Activated T-helper 1 cell treated with anti-CD3 and anti-CD28 coated beads, Interleukin-12 subunit alpha, Interleukin-12 subunit beta, Interleukin-2, Interleukin-4 antibody, amounts not matched to agents 30 ng/mL and 10 ng/mL and 1 ng/mL, durations not matched to agents 14 hours and 24 hours and 36 hours (primary cell): ENCODE measurements at regions of chr14 and their contacts with region 1.

Region 1: DNA sequence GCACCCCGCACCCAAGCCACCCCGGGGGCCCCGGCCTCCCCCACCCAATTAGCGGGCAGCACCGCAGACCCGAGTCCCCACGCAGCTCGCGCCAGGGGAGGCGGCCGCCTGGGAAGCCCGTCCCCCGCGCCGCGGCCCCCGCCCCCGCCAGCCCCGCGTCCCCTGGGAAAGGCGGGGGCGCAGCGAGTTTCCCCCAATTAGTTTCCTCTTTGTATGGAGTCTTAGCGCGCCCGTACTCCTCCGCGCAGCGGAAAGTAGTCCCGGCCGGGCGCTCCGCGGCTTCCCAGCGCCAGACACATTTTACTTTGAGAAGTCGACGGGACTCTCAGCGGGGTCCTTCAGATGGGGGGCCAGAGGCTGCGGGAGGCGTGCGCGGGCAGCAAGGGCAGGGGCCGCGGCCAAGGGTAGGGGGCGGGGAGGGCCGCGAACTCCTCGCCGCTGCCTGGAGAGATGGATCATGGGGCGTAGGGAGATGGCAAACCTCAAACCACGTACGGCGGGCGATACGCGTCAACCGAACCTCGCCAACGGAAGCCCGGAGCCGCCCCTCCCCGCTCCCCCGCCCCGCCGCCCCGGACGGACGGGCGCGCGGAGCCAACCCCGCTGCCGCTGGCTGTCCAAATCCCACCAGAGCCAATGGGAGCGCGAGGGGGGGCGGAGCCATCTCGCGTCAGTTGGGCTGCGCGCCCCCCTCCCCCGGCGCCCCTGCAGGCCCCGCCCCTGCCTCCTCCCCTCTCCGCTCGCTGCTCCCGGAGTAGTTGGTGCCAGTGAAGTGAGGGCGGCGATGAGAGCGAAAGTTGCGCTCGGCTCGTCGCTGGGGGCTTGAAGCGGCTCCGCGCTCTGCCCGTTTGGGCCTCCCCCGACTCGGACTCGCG is at the start of gene RCOR1:
- DNase-seq: peak; percentile 95
- H3K4me3 Mint-ChIP-seq: peak within 1 kb of the TSS; percentile 94
- H3K27ac Mint-ChIP-seq: peak within 1 kb of the TSS; percentile 96
- H3K4me1 Mint-ChIP-seq: peaks cover 18% of the 10 kb centered on the region
- H3K27me3 Mint-ChIP-seq: no peaks in the 10 kb centered on the region
- total RNA-seq, gene RCOR1: 23.9 and 25.2 TPM in 2 replicates

Region 2: GRCh38 chr14:101823511-101824120 is 768.5 kb before region 1 on chr14:
- intact Hi-C with region 1: loop called (anchors 5 kb)
- DNase-seq: peak; percentile 74
- H3K4me3 Mint-ChIP-seq: peak overlapping the region; percentile 78
- H3K27ac Mint-ChIP-seq: peak overlapping the region; percentile 98
- H3K4me1 Mint-ChIP-seq: peaks cover 84% of the 10 kb centered on the region
- H3K27me3 Mint-ChIP-seq: no peaks in the 10 kb centered on the region

Region 3: DNA sequence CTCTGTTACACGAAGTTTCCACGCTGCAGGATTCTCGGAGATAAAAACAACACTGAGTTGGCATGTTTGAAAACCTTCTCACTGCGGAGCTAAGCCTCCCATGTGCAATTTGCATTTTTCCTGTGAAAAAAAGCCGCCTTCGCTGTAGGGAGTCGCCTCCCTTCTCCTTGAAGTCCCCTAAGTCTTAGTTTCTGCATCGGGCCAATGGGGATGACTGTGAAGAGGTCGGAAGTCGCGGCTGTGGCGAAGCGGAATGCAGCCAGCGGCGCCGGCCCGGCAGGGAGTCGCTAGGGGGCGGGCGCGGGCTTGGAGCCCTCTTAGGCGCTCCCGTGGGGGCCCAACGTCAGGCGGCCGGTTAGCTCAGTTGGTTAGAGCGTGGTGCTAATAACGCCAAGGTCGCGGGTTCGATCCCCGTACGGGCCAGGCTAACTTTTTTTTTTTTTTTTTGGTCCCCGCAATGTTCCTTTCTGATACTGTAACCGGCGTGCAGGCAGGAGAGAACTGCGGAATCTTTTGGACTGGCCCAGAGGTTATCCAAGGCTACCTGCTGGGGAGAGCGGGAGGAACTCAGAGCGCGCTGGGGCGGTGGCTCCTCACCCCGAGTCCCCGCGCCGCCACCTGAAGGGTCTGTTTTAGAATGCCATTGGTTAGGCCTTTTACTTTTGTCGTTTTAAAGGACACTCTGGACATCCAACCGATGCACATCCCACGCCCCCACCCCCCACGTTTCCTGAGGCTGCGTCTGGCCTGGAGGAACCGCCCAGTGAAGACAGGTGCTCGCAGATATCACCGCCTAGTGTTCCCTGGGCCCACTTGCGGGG is 275.2 kb before region 1 on chr14:
- intact Hi-C with region 1: loop called (anchors 5 kb)
- DNase-seq: peak; percentile 94
- H3K4me3 Mint-ChIP-seq: peak overlapping the region; percentile 94
- H3K27ac Mint-ChIP-seq: peak overlapping the region; percentile 92
- H3K4me1 Mint-ChIP-seq: peaks cover 56% of the 10 kb centered on the region
- H3K27me3 Mint-ChIP-seq: peaks cover 3% of the 10 kb centered on the region

Region 4: DNA sequence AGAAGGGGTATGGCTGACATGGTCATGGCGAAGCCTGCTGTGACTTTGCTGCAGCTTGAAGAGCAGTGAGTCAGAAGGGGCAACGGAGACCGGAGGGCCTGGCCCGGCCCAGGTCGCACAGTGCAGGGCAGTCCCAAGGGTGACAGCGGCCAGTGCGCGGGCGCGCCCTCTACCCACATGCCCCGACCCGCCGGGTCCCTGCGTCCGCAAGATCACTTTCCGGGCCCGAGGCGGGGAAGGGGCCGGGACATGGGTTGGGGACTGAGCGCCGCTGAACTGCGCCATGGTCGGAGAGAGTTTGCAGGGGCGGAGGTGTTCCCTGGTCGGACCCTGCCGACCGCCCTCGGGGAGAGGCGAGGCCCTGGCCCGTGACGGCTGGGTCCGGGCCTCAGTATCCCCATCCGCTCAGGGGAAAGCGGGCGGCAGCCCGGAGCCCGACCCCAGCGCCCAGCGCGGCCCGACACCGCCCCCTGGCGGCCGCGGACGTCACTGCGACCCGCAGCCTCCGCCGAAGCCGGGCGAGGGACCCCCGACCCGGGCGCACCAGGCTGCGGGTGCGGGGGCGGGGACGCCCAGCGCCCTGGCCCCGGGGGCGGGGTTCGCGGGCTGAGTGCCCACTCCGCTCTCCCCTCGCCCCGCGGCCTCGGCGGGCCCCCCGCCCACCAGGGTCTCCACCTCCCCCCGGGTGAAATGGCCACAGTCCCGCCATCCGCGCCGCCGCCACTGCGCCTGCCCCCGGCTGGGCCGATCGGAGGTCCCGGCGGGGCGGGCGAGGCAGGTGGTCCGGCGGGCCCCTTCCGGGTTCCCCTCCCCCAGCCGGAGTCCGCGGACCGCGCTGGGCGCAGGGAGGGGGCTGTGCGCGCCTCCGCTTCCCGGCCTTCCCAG is 75.4 kb before region 1 on chr14:
- intact Hi-C with region 1: loop called (anchors 1 kb)
- DNase-seq: peak; percentile 59
- H3K4me3 Mint-ChIP-seq: peak overlapping the region; percentile 82
- H3K27ac Mint-ChIP-seq: peak overlapping the region; percentile 61
- H3K4me1 Mint-ChIP-seq: no peaks in the 10 kb centered on the region
- H3K27me3 Mint-ChIP-seq: peaks cover 9% of the 10 kb centered on the region

Region 5: DNA sequence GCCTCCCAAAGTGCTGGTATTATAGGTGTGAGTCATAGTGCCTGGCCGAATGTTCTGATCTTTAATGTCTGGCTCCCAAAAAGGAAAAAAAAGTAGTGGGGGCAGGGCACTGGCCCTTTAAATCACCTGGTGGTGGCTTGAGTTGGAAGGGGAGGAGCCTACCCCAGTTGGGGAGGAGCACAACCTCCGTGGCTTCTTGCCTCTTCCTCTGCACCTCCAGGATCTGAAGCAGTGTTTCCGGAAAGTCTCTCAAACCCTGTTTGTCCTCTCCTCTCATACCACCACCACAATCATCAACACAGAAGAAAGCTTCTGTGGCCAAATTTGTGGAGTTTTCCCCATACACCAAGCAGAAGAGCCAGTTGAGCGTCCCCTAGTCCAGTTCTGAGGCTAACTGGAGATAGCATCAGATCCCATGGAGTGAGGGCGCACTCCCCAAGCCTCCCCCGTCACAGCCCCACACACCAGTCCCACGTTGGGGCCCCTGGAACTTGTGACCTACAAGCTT is 24.0 kb before region 1 on chr14:
- intact Hi-C with region 1: loop called (anchors 1 kb)
- DNase-seq: peak; percentile 64
- H3K4me3 Mint-ChIP-seq: peak overlapping the region; percentile 43
- H3K27ac Mint-ChIP-seq: peak overlapping the region; percentile 93
- H3K4me1 Mint-ChIP-seq: peaks cover 11% of the 10 kb centered on the region
- H3K27me3 Mint-ChIP-seq: no peaks in the 10 kb centered on the region

Region 6: GRCh38 chr14:102645746-102646440 is 53.8 kb after region 1 on chr14:
- intact Hi-C with region 1: no loop called
- DNase-seq: no peak
- H3K4me3 Mint-ChIP-seq: no peak overlapping the region
- H3K27ac Mint-ChIP-seq: peak overlapping the region; percentile 1
- H3K4me1 Mint-ChIP-seq: peaks cover 30% of the 10 kb centered on the region
- H3K27me3 Mint-ChIP-seq: no peaks in the 10 kb centered on the region

Region 7: GRCh38 chr14:102819176-102819628 is 227.1 kb after region 1 on chr14:
- intact Hi-C with region 1: loop called (anchors 1 kb)
- DNase-seq: peak; percentile 70
- H3K4me3 Mint-ChIP-seq: peak overlapping the region; percentile 81
- H3K27ac Mint-ChIP-seq: peak overlapping the region; percentile 88
- H3K4me1 Mint-ChIP-seq: peaks cover 85% of the 10 kb centered on the region
- H3K27me3 Mint-ChIP-seq: no peaks in the 10 kb centered on the region

Region 8: GRCh38 chr14:102928412-102929240 is 336.5 kb after region 1 on chr14:
- intact Hi-C with region 1: no loop called
- DNase-seq: peak; percentile 51
- H3K4me3 Mint-ChIP-seq: peak overlapping the region; percentile 30
- H3K27ac Mint-ChIP-seq: no peak overlapping the region
- H3K4me1 Mint-ChIP-seq: no peaks in the 10 kb centered on the region
- H3K27me3 Mint-ChIP-seq: peaks cover 43% of the 10 kb centered on the region